ENCODE measurements at regions of chr2 and their contacts with region 1.

Region 1: GRCh38 chr2:108958002-108958401 is 31.0 kb downstream of the EDAR start:
- DNase-seq: no peak
- H3K4me3 Mint-ChIP-seq: no peak overlapping the region
- H3K27ac Mint-ChIP-seq: peak overlapping the region; percentile 8
- H3K4me1 Mint-ChIP-seq: peaks cover 42% of the 10 kb centered on the region
- H3K27me3 Mint-ChIP-seq: no peaks in the 10 kb centered on the region

Region 2: DNA sequence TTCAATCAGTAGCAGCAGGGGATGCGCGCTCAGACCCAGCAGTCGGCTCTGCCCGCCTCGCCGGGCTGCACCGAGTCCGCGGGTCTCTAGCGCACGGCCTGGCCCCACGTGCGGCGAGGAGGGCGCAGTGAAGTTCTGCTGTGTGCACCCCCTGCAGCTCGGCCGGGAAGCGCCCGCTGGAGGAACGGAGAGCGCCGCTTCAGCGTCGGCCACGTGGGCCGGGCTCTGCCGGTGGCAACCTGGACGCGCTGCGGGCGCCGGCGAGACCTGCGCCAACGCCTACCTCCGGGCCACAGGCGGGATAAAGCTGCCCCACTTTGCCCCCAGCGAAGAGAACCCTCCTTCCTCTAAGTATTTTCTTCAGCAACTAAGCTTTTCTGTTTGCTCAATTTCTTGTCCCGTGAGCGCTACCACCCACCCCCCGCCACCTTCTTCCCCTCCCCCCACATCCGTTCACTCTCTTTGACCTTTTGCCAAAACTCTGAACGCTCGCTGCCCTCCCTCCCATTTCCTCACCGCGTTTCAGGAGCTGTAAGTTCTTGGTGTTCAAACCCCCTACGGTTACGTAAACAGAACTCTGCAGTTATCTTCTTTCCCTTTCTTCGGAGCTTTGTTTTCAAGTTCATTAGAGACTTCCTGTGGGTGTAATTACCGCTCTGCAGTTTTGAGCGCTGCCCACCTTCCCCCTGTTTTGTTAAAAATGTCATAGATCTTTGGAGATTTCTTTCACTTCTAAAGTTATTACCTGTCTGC is 73.7 kb after region 1 on chr2:
- CTCF ChIA-PET with region 1: no interaction called
- POLR2A ChIA-PET with region 1: no interaction called
- intact Hi-C with region 1: loop called (anchors 5 kb)
- DNase-seq: peak; percentile 79
- H3K4me3 Mint-ChIP-seq: peak overlapping the region; percentile 75
- H3K27ac Mint-ChIP-seq: peak overlapping the region; percentile 83
- H3K4me1 Mint-ChIP-seq: peaks cover 40% of the 10 kb centered on the region
- H3K27me3 Mint-ChIP-seq: no peaks in the 10 kb centered on the region

Measured in activated CD4-positive, alpha-beta memory T cell treated with anti-CD3 and anti-CD28 coated beads for 36 hours (primary cell).